Psoas muscle (tissue), 8 donors: ENCODE measurements at regions of chr21 and their contacts with region 1.

Region 1: DNA sequence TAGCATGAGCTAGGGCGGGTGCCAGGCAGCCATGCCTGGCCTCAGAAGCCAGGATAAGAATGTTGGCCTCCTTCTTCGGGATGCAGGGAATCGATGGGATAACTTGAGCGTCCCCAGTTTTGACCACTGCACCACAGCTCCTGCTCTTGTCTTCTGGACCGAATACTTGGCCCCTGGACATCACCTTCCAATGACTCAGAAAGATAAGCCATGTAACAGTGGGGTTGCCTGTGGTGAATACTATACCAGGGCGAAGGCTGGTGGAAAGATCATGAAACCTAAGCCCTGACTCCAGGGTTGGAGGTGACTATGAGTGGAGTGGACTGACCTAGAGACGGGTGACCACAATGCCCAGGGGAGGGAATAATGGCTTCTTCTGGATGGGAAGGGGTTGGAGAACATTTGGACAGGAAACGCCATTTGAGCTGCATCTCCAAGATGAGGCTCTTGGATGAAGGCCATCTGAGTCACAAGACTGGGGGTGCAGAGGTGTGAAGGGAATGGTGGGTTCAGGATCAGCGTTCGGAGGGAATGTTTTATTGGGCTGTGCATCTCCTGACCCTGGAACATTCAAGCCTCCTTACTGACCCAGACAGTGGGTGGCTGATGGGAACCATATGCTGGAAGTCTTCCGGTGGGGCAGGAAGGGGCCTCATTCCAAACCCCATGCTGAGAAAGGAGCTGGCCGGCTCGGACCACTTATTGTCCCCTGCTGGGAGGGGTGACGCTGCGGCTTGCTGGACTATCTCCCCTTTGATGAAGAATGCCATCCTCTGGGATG is 18.5 kb upstream of the KCNE2 start:
- DNase-seq: no peak
- ATAC-seq: peak in 1 of 4 donors; percentile 5
- H3K4me3 ChIP-seq: no peak overlapping the region
- H3K27ac ChIP-seq: peak overlapping the region; percentile 47
- H3K4me1 ChIP-seq: peaks cover 10% of the 10 kb centered on the region
- H3K27me3 ChIP-seq: no peaks in the 10 kb centered on the region
- CTCF ChIP-seq: no peak

Region 2: GRCh38 chr21:33915368-33916199 is 429.7 kb before region 1 on chr21 and contains the start of gene ATP5PO:
- intact Hi-C with region 1: loop called in 1 of 2 experiments (anchors 5 kb)
- DNase-seq: peak; percentile 98 to 99
- ATAC-seq: peak; percentile 99 to 100 (median 100)
- H3K4me3 ChIP-seq: peak within 1 kb of the TSS; percentile 99
- H3K27ac ChIP-seq: peak within 1 kb of the TSS; percentile 89
- H3K4me1 ChIP-seq: peaks cover 20% of the 10 kb centered on the region
- H3K27me3 ChIP-seq: no peaks in the 10 kb centered on the region
- CTCF ChIP-seq: no peak
- total RNA-seq, gene ATP5PO: 294 to 473 (median 332) TPM

Region 3: GRCh38 chr21:33924079-33924765 is 421.1 kb before region 1 on chr21:
- intact Hi-C with region 1: loop called (anchors 1 to 5 kb)
- DNase-seq: peak; percentile 88 to 93
- ATAC-seq: peak; percentile 97 to 100 (median 98)
- H3K4me3 ChIP-seq: no peak overlapping the region
- H3K27ac ChIP-seq: no peak overlapping the region
- H3K4me1 ChIP-seq: no peaks in the 10 kb centered on the region
- H3K27me3 ChIP-seq: no peaks in the 10 kb centered on the region
- CTCF ChIP-seq: peak; percentile 92

Region 4: DNA sequence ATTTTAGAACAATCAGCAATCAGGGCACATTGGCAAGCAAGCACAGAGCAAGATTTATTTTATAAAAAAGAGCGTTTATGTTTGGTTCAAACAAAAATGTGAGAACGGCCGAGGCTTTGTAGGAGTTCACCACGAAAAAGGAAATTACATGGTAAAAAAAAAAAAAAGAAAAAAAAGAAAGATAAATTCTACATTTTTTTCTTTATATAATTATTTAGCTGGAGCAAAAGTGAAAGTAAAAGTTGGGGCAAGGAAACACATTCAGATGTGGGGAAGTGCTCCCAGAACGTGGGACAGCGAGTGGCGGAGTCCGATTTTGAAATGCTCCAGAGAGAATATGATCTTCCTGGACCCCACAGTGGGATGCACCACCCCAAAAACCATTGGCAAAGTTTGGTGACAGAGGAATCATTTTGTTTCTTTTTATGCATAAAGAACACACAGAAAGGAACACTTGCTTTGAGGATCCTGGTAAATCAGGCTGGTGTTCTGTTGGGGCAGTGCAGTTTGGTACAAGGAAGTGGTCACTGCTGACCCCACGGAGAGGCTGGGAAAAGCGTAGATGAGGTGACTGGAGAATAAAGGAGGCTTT is 413.4 kb before region 1 on chr21:
- intact Hi-C with region 1: loop called (anchors 5 kb)
- DNase-seq: no peak
- ATAC-seq: peak in 3 of 4 donors; percentile 42 to 67 (median 46)
- H3K4me3 ChIP-seq: peak overlapping the region; percentile 63
- H3K27ac ChIP-seq: no peak overlapping the region
- H3K4me1 ChIP-seq: peaks cover 5% of the 10 kb centered on the region
- H3K27me3 ChIP-seq: no peaks in the 10 kb centered on the region
- CTCF ChIP-seq: no peak